Activated T-helper 1 cell treated with anti-CD3 and anti-CD28 coated beads, Interleukin-12 subunit alpha, Interleukin-12 subunit beta, Interleukin-2, Interleukin-4 antibody, amounts not matched to agents 30 ng/mL and 10 ng/mL and 1 ng/mL, durations not matched to agents 14 hours and 24 hours and 36 hours (primary cell): ENCODE measurements at regions of chr3 and their contacts with region 1.

Region 1: GRCh38 chr3:167380004-167380689 is at the start of gene ZBBX:
- DNase-seq: peak; percentile 81
- H3K4me3 Mint-ChIP-seq: peak within 1 kb of the TSS; percentile 74
- H3K27ac Mint-ChIP-seq: no peak within 1 kb of the TSS
- H3K4me1 Mint-ChIP-seq: peaks cover 9% of the 10 kb centered on the region
- H3K27me3 Mint-ChIP-seq: peaks cover 4% of the 10 kb centered on the region
- total RNA-seq, gene ZBBX: not detected in 2 replicates

Region 2: GRCh38 chr3:167882067-167882667 is 502.0 kb after region 1 on chr3:
- intact Hi-C with region 1: loop called (anchors 1 kb)
- DNase-seq: no peak
- H3K4me3 Mint-ChIP-seq: no peak overlapping the region
- H3K27ac Mint-ChIP-seq: no peak overlapping the region
- H3K4me1 Mint-ChIP-seq: no peaks in the 10 kb centered on the region
- H3K27me3 Mint-ChIP-seq: peaks cover 9% of the 10 kb centered on the region